Activated CD8-positive, alpha-beta T cell treated with anti-CD3 and anti-CD28 coated beads, Interleukin-2, amount 10 ng/mL, durations not matched to agents 7 days and 5 days (primary cell): ENCODE measurements at regions of chr2 and their contacts with region 1.

Region 1: GRCh38 chr2:42810121-42810970 is 18.0 kb upstream of the HAAO start:
- DNase-seq: peak; percentile 96
- ATAC-seq: peak; percentile 84
- H3K4me3 Mint-ChIP-seq: peak overlapping the region; percentile 91
- H3K27ac Mint-ChIP-seq: peak overlapping the region; percentile 100
- H3K4me1 Mint-ChIP-seq: peaks cover 25% of the 10 kb centered on the region
- H3K27me3 Mint-ChIP-seq: peaks cover 9% of the 10 kb centered on the region

Region 2: DNA sequence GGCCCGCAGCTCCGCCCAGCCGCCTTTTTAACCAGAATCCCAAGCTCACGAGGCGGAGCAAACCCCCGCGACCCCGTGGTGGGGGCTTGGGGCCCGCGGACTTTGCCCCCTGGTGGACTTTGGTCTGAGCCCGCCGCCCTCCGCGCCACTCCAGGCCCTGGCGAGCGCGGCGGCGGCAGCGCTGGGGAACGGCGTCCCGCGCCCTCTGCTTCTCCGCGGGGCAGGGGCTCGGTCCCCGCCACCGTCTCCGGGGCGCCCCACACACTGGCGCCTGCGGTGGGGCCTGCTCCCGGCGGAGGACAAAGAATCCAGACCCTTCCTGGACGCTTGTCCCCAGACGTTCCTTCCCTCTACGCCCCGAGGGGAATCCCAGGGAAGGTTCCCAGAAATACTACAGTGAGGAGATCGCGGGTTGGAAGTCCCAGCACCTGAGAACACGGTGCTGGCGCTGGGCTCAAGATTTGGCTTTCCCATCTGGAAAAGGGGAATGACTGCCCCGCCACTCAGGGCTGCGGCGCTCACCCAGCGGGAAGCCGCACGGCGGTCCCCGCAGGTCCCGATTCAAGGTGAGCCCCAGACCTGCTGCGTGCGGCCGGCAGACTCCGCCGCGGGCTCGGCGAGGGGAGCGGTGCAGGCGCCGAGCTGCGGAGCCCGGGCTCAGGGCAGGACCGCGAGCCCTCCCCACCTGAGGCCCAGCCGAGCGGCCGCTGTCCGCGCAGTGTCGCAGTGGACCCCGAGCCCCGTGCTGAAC is 17.6 kb before region 1 on chr2 and contains the start of gene HAAO:
- CTCF ChIA-PET with region 1: interaction called, 6 read pairs
- POLR2A ChIA-PET with region 1: interaction called, 24 read pairs
- DNase-seq: no peak
- ATAC-seq: peak; percentile 64
- H3K4me3 Mint-ChIP-seq: peak within 1 kb of the TSS; percentile 54
- H3K27ac Mint-ChIP-seq: no peak within 1 kb of the TSS
- H3K4me1 Mint-ChIP-seq: peaks cover 32% of the 10 kb centered on the region
- H3K27me3 Mint-ChIP-seq: peaks cover 44% of the 10 kb centered on the region
- total RNA-seq, gene HAAO: 0.37 to 0.40 TPM

Region 3: GRCh38 chr2:42828487-42829425 is 18.4 kb after region 1 on chr2:
- CTCF ChIA-PET with region 1: interaction called, 10 read pairs
- POLR2A ChIA-PET with region 1: interaction called, 10 read pairs
- DNase-seq: peak; percentile 80
- ATAC-seq: peak; percentile 93
- H3K4me3 Mint-ChIP-seq: no peak overlapping the region
- H3K27ac Mint-ChIP-seq: no peak overlapping the region
- H3K4me1 Mint-ChIP-seq: peaks cover 12% of the 10 kb centered on the region
- H3K27me3 Mint-ChIP-seq: peaks cover 9% of the 10 kb centered on the region